Activated T-helper 1 cell treated with anti-CD3 and anti-CD28 coated beads, Interleukin-12 subunit alpha, Interleukin-12 subunit beta, Interleukin-2, Interleukin-4 antibody, amounts not matched to agents 30 ng/mL and 10 ng/mL and 1 ng/mL, durations not matched to agents 14 hours and 24 hours and 36 hours (primary cell): ENCODE measurements at regions of chr2 and their contacts with region 1.

Region 1: DNA sequence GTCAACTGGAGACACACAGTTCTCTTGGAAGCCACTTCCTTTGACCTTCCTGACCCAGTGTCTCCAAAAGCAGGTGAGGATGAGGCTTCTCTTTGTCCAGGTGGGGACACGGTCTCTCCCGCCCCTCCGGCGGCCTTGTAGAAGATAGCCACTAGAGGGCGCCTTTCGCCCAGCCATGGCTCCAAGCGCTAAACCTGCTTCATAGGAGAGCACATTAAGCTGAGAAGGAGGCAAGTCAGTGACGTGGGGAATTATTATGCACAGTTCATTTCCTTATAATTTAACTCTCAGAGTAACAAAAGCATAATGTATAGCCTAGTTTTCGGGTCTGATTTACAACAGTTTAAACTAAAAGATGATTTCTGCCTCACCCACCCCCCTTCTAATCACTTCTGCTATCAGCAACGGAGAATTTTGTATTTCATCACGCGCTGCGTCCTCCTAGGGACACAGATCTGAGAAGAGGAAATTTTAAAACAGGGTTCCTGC is 208.7 kb downstream of the ICOS start:
- DNase-seq: peak; percentile 71
- H3K4me3 Mint-ChIP-seq: peak overlapping the region; percentile 79
- H3K27ac Mint-ChIP-seq: peak overlapping the region; percentile 63
- H3K4me1 Mint-ChIP-seq: peaks cover 15% of the 10 kb centered on the region
- H3K27me3 Mint-ChIP-seq: peaks cover 8% of the 10 kb centered on the region

Region 2: GRCh38 chr2:204072443-204073324 is 72.6 kb before region 1 on chr2:
- intact Hi-C with region 1: loop called (anchors 1 kb)
- DNase-seq: peak; percentile 44
- H3K4me3 Mint-ChIP-seq: no peak overlapping the region
- H3K27ac Mint-ChIP-seq: no peak overlapping the region
- H3K4me1 Mint-ChIP-seq: peaks cover 13% of the 10 kb centered on the region
- H3K27me3 Mint-ChIP-seq: no peaks in the 10 kb centered on the region

Region 3: GRCh38 chr2:204177977-204178540 is 32.8 kb after region 1 on chr2:
- intact Hi-C with region 1: loop called (anchors 1 kb)
- DNase-seq: peak; percentile 51
- H3K4me3 Mint-ChIP-seq: no peak overlapping the region
- H3K27ac Mint-ChIP-seq: no peak overlapping the region
- H3K4me1 Mint-ChIP-seq: no peaks in the 10 kb centered on the region
- H3K27me3 Mint-ChIP-seq: peaks cover 17% of the 10 kb centered on the region

Region 4: GRCh38 chr2:204260162-204260877 is 115.0 kb after region 1 on chr2:
- intact Hi-C with region 1: loop called (anchors 1 kb)
- DNase-seq: no peak
- H3K4me3 Mint-ChIP-seq: no peak overlapping the region
- H3K27ac Mint-ChIP-seq: no peak overlapping the region
- H3K4me1 Mint-ChIP-seq: no peaks in the 10 kb centered on the region
- H3K27me3 Mint-ChIP-seq: peaks cover 38% of the 10 kb centered on the region

Region 5: GRCh38 chr2:204691911-204692510 is 546.7 kb after region 1 on chr2:
- intact Hi-C with region 1: loop called (anchors 2 kb)
- DNase-seq: no peak
- H3K4me3 Mint-ChIP-seq: no peak overlapping the region
- H3K27ac Mint-ChIP-seq: no peak overlapping the region
- H3K4me1 Mint-ChIP-seq: peaks cover 11% of the 10 kb centered on the region
- H3K27me3 Mint-ChIP-seq: peaks cover 3% of the 10 kb centered on the region

Region 6: DNA sequence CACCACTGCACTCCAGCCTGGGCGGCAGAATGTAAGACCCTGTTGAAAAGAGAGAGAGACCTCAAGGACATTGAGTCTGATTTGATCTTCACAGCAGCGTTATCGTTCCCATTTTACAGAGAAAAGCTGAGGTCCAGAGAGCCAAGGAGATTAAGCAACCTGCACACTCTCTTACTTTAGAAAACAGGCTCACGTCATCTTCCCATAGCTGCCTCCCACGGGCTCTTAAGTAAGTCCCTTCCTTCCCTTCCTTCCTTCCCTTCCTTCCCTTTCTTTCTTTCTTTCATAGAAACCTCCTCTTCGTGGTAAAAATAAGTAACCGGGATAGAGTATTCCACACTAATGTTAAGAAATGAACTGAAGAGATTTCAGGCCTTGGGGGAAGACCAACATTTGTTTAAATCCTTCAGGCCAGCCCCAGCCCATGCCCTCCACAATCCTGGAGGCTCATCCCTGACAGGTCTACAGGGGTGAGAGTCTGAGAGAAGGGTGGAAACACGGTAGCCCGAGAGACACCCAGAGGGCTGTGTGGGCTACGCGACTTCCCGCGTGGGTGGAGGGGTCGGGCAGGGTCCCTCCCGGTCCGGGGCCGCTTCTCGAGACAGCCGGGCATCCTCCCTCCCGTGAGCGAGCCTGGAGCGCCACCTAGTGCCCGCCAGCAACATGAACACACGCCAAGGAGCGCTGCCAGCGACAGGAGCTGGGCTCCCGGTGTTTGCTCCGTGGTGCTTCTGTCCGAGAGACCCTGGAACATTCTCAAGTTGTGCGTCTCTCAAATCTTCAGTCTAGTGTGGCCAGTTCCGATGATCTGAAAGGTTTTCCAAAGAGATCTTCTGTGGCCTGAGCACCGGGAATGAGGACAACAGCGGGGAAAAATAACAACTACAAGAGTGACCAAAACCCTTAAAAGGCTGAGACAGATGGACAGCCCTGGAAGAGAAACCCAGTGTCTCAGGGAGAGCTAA is 1780.3 kb after region 1 on chr2:
- intact Hi-C with region 1: loop called (anchors 5 kb)
- DNase-seq: peak; percentile 46
- H3K4me3 Mint-ChIP-seq: peak overlapping the region; percentile 4
- H3K27ac Mint-ChIP-seq: no peak overlapping the region
- H3K4me1 Mint-ChIP-seq: peaks cover 14% of the 10 kb centered on the region
- H3K27me3 Mint-ChIP-seq: peaks cover 30% of the 10 kb centered on the region